ENCODE measurements at regions of chr20 and their contacts with region 1.

Region 1: GRCh38 chr20:22449188-22449973 is 135.0 kb downstream of the FOXA2 start:
- DNase-seq: no peak
- ATAC-seq: no peak
- H3K4me3 ChIP-seq: no peak overlapping the region
- H3K27ac ChIP-seq: no peak overlapping the region
- H3K4me1 ChIP-seq: no peaks in the 10 kb centered on the region
- H3K27me3 ChIP-seq: peaks cover 0 to 2% (median 0%) of the 10 kb centered on the region in 3 donors
- CTCF ChIP-seq: no peak
- POLR2A ChIP-seq: no peak

Region 2: GRCh38 chr20:22346716-22347115 is 102.7 kb before region 1 on chr20:
- in situ Hi-C with region 1: loop called in 1 of 4 experiments (anchors 10 kb)
- intact Hi-C with region 1: no loop called
- DNase-seq: no peak
- ATAC-seq: no peak
- H3K4me3 ChIP-seq: no peak overlapping the region
- H3K27ac ChIP-seq: no peak overlapping the region
- H3K4me1 ChIP-seq: no peaks in the 10 kb centered on the region
- H3K27me3 ChIP-seq: no peaks in the 10 kb centered on the region
- CTCF ChIP-seq: no peak
- POLR2A ChIP-seq: no peak

Region 3: GRCh38 chr20:23019403-23019802 is 570.0 kb after region 1 on chr20:
- in situ Hi-C with region 1: no loop called
- intact Hi-C with region 1: no loop called
- DNase-seq: peak in 1 of 2 donors; percentile 23
- ATAC-seq: peak; percentile 30 to 44
- H3K4me3 ChIP-seq: no peak overlapping the region
- H3K27ac ChIP-seq: no peak overlapping the region
- H3K4me1 ChIP-seq: peaks cover 0 to 4% of the 10 kb centered on the region in 2 donors
- H3K27me3 ChIP-seq: no peaks in the 10 kb centered on the region
- CTCF ChIP-seq: no peak
- POLR2A ChIP-seq: no peak

Measured in gastrocnemius medialis (tissue), 4 donors.